ENCODE measurements at regions of chr15 and their contacts with region 1.

Region 1: DNA sequence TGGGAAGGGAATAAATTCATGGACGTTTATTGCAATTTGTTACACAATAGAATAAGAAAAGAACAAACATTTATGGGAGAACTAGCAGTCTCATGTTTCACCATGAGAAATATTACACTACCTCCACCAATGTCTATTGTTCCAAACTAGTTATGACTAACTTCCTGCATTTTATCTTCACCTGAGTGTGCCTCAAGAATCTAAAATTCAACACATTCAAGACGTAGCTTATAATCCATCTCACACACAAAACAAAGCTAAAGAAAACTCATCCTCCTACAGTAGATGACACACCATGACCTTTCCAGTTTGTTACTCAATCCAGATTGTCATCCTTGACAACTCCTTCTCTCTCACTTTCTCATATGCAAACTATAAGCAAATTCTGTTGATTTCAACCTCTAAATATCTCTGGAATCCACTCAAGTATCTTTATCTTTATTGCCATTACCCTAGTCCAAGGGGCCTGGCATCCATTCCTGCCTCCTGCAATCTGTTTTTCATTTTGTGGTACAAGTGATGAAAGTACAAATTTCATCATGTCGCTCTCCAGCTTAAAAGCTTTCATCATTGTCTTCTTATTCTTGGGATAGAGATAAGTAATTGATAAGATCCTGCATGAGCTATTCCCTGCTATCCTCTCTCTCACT is 229.9 kb downstream of the NR2F2 start:
- DNase-seq: no peak
- ATAC-seq: no peak
- H3K4me3 ChIP-seq: no peak overlapping the region
- H3K27ac ChIP-seq: no peak overlapping the region
- H3K4me1 ChIP-seq: no peaks in the 10 kb centered on the region
- H3K27me3 ChIP-seq: no peaks in the 10 kb centered on the region
- CTCF ChIP-seq: no peak
- EP300 ChIP-seq: no peak
- POLR2A ChIP-seq: no peak
- RAD21 ChIP-seq: no peak

Region 2: DNA sequence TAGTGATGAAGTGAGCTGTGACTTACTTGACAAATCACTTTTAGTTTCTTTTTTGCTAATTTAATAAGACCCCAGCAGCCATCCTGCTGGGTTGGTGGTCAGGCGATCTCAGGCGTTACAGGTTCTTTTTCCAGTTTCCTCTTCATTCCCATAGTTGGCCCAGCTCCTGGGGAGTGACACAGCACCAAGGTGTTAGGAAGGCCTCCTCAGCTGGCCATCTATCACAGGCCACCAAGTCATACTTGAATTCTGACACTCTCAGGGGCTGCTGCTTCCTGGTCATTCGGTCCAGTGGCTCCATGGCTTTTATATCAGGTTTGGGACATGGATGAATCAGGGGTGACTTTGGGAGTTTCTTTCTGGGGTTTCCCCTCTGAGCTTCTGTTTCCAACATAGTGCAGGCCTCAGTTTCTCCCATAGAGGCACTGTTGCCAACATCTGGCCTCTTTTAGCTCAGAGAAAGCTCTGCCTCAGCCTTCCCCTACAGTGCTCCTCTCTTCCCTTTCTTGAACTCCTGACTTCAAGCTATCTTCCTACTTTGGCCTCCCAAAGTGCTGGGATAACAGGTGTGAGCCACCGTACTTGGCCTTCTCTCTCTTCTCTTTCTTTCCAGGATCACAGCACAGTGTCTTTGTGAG is 18.1 kb before region 1 on chr15:
- CTCF ChIA-PET with region 1: interaction called, 11 read pairs
- POLR2A ChIA-PET with region 1: interaction called, 3 read pairs
- RAD21 ChIA-PET with region 1: interaction called, 13 read pairs
- SMC1A ChIA-PET with region 1: interaction called, 9 read pairs
- in situ Hi-C with region 1: no loop called
- intact Hi-C with region 1: no loop called
- DNase-seq: no peak
- ATAC-seq: peak; percentile 77
- H3K4me3 ChIP-seq: no peak overlapping the region
- H3K27ac ChIP-seq: no peak overlapping the region
- H3K4me1 ChIP-seq: no peaks in the 10 kb centered on the region
- H3K27me3 ChIP-seq: no peaks in the 10 kb centered on the region
- CTCF ChIP-seq: no peak
- EP300 ChIP-seq: no peak
- POLR2A ChIP-seq: no peak
- RAD21 ChIP-seq: no peak

Region 3: GRCh38 chr15:96807361-96807760 is 247.0 kb after region 1 on chr15:
- CTCF ChIA-PET with region 1: no interaction called
- POLR2A ChIA-PET with region 1: no interaction called
- RAD21 ChIA-PET with region 1: no interaction called
- SMC1A ChIA-PET with region 1: no interaction called
- in situ Hi-C with region 1: no loop called
- intact Hi-C with region 1: no loop called
- DNase-seq: no peak
- ATAC-seq: no peak
- H3K4me3 ChIP-seq: no peak overlapping the region
- H3K27ac ChIP-seq: no peak overlapping the region
- H3K4me1 ChIP-seq: no peaks in the 10 kb centered on the region
- H3K27me3 ChIP-seq: no peaks in the 10 kb centered on the region
- CTCF ChIP-seq: no peak
- EP300 ChIP-seq: no peak
- POLR2A ChIP-seq: no peak
- RAD21 ChIP-seq: no peak